Transverse colon (tissue), 4 donors: ENCODE measurements at regions of chr6 and their contacts with region 1.

Region 1: DNA sequence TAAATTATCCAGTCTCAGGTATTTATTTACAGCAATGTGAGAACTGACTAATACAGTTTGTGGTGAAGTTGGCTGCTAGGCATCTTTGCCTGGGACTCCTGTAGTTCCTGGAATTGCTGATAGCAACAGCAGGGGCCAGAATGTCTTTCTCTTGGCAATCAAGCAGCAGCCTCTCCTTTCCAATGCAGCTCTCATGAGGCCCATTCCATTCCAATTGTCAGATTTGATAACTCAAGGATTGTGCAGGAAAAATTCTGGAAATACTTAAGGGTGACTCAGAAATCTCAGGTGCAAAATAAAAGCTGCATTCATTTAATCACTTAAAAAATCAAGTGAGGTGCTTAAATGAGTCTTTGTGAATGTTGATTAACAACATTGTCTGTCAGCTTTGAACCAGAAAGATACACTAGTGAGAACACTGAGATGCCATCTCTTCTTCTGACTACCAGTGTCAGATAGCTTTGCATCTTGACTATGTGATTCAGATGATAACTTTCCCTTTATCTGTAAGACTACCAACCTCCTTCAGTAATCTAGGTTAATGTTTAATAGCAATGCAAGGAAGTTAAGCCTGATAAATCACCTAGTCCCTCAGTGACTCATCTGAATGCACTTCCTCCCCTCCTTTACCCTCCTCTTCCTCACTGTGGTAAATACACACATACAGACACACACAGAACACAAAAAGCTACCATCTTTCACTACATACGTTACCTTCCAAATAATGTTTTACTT is 32.1 kb upstream of the COL21A1 start:
- DNase-seq: no peak
- H3K4me3 ChIP-seq: no peak overlapping the region
- H3K27ac ChIP-seq: no peak overlapping the region
- H3K4me1 ChIP-seq: peaks cover 0 to 9% (median 4%) of the 10 kb centered on the region in 4 donors
- H3K27me3 ChIP-seq: no peaks in the 10 kb centered on the region
- CTCF ChIP-seq: no peak
- EP300 ChIP-seq: no peak
- POLR2A ChIP-seq: no peak

Region 2: DNA sequence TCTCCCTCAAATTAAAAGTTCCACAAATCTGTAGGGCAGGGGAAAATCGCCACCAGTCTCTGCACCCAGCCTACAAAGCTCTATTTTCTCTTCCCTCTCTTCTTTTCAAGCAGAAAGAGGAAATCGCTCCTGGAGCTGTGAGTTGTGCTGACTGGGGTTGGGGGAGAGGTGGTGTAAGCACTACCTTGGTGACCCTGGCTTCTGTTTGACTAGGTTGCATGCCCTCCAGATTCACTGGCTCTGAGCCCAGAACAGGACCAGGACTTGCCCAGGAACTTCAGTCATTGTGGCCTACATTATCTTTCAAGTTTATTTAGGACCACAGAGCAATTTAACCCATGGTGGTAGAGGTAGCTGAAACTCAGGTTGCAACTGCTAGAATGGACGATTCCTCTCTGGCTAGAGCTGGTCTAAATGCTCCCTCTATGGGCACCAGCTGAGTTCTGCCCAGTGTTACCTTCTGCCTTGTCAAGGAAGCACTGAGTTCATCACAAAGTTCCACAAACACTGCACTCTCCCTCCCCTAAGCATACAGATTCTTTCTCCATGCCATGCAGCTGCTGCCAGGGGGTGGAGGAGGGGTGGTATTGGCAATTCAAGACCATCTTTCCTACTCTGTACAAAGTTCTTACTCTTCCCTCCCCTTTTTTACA is 282.2 kb before region 1 on chr6:
- in situ Hi-C with region 1: loop called in 1 of 4 experiments (anchors 10 kb)
- intact Hi-C with region 1: no loop called
- DNase-seq: no peak
- H3K4me3 ChIP-seq: no peak overlapping the region
- H3K27ac ChIP-seq: no peak overlapping the region
- H3K4me1 ChIP-seq: no peaks in the 10 kb centered on the region
- H3K27me3 ChIP-seq: no peaks in the 10 kb centered on the region
- CTCF ChIP-seq: no peak
- EP300 ChIP-seq: no peak
- POLR2A ChIP-seq: no peak

Region 3: DNA sequence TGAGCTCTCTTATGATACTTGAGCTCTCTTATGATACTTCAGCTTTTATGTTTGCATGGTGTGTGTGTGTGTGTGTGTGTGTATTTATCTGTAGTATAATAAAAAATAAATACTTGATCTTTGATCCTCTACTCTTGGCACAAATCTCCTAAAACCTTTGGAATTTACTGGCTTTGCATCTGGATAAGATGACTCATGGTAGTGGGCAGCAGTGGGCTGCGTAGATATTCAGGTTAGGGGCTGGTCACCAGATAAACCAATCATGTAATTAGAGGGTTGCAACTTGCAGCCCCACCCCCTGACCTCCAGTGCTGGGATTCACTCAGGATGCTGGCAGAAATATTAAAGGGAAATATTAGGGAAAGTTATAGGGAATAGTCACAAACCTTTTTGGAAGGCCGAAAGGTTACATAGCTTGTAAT is 119.7 kb after region 1 on chr6:
- in situ Hi-C with region 1: no loop called
- intact Hi-C with region 1: no loop called
- DNase-seq: no peak
- H3K4me3 ChIP-seq: no peak overlapping the region
- H3K27ac ChIP-seq: no peak overlapping the region
- H3K4me1 ChIP-seq: peaks cover 0 to 20% (median 1%) of the 10 kb centered on the region in 4 donors
- H3K27me3 ChIP-seq: no peaks in the 10 kb centered on the region
- CTCF ChIP-seq: no peak
- EP300 ChIP-seq: no peak
- POLR2A ChIP-seq: no peak

Region 4: DNA sequence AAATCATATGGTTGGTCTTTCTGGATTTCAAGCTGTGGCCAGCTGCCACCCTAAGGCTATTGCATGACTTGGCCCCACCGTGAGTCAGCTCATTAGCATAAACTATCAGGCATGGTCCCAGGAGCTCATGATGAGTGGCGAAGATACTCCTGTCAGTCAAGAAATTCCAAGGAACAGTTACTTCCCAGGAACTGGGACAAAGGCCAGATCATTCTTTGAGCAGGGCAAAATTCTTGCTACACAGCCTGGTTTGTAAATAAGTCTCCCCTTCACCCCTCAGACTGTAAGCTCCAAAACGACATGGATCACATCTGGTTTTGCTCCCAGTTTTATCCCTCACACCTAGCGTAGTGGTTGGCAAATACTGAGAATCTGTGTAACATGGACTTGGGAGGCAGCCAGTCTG is 734.0 kb after region 1 on chr6:
- in situ Hi-C with region 1: no loop called
- intact Hi-C with region 1: no loop called
- DNase-seq: no peak
- H3K4me3 ChIP-seq: no peak overlapping the region
- H3K27ac ChIP-seq: no peak overlapping the region
- H3K4me1 ChIP-seq: no peaks in the 10 kb centered on the region
- H3K27me3 ChIP-seq: no peaks in the 10 kb centered on the region
- CTCF ChIP-seq: no peak
- EP300 ChIP-seq: no peak
- POLR2A ChIP-seq: no peak